Caco-2 (cell line): ENCODE measurements at regions of chr1 and their contacts with region 1.

Region 1: DNA sequence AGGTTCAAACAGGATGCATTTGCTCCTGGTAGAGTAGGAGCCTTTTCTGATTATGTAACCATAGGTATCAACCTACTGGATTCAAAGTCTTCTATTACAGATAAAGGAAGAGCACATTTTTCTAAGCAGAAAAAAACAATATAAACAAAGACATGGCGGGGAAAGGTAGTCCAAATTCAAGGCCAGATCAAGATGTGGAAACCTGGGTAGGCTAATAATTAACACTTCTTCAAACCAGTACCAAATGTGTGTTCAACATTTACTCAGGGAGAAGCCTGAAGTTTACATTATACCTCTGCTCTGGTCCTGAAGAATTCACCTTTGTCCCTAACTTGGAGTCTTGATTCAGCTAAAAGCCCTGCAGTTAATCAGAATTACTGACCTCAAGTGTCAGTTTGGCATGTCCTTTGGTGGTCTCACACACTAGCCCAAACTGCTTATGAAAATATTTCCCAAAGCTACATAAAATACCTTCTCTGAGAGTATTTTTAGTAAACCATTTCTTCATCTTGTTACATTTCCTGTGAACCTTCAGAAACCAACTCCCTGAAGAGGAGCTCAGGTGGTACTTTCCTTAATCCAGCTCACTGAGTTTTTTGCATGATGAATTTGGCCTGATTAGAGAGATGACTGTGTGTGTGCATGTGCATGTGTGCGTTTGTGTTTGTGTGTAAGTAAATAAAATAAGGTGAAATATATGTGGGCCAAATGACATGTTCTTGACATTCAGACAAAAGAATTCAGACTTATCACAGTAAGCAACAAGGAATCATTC is 70.2 kb downstream of the TOR3A start:
- DNase-seq: peak in 1 of 2 experiments; percentile 57
- H3K4me3 ChIP-seq: no peak overlapping the region
- H3K4me3 Mint-ChIP-seq: peak overlapping the region; percentile 44
- H3K27ac Mint-ChIP-seq: peak overlapping the region; percentile 15
- H3K4me1 ChIP-seq: peaks cover 21% of the 10 kb centered on the region
- H3K4me1 Mint-ChIP-seq: peaks cover 23% of the 10 kb centered on the region
- H3K27me3 ChIP-seq: no peaks in the 10 kb centered on the region
- H3K27me3 Mint-ChIP-seq: no peaks in the 10 kb centered on the region
- CTCF ChIP-seq: no peak

Region 2: GRCh38 chr1:179164494-179164893 is 12.4 kb after region 1 on chr1:
- CTCF ChIA-PET with region 1: no interaction called
- POLR2A ChIA-PET with region 1: interaction called, 14 read pairs
- intact Hi-C with region 1: loop called (anchors 1 kb)
- DNase-seq: peak; percentile 41 to 48
- H3K4me3 ChIP-seq: no peak overlapping the region
- H3K4me3 Mint-ChIP-seq: no peak overlapping the region
- H3K27ac Mint-ChIP-seq: no peak overlapping the region
- H3K4me1 ChIP-seq: peaks cover 34% of the 10 kb centered on the region
- H3K4me1 Mint-ChIP-seq: peaks cover 22% of the 10 kb centered on the region
- H3K27me3 ChIP-seq: no peaks in the 10 kb centered on the region
- H3K27me3 Mint-ChIP-seq: no peaks in the 10 kb centered on the region
- CTCF ChIP-seq: no peak

Region 3: DNA sequence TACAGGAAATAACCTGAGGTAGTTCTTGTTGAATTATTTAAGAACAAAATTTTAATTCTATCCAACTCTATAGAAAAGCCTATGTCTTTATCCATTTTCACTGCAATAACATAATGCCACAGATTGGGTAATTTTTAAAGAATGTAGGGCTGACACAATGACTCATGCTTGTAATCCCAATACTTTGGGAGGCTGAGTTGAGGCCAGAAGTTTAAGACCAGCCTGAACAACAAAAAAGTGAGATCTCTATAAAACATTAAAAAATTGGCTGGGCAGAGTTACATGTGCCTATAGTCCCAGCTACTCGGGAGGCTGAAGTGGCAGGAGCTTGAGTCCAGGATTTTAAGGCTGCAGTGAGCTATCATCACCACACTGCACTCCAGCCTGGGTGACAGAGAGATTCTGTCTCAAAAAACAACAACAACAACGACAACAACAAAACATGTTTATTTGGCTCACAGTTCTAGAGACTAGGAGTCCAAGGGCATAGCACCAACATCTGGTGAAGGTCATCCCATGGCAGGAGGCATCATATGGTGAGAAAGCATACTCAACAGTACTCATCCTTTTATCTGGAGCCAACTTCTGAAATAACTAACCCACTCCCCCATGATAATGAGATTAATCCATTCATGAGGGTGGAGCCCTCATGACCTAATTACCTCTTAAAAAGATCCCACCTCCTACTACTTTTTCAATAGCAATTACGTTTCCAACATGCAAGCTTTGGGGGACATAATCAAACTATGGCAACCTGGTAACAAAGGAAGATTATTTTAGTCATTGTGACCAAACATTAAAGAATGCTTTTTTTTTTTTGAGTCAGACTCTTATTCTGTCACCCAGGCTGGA is 17.7 kb after region 1 on chr1:
- CTCF ChIA-PET with region 1: no interaction called
- POLR2A ChIA-PET with region 1: interaction called, 14 read pairs
- intact Hi-C with region 1: no loop called
- DNase-seq: no peak
- H3K4me3 ChIP-seq: no peak overlapping the region
- H3K4me3 Mint-ChIP-seq: no peak overlapping the region
- H3K27ac Mint-ChIP-seq: no peak overlapping the region
- H3K4me1 ChIP-seq: peaks cover 13% of the 10 kb centered on the region
- H3K4me1 Mint-ChIP-seq: peaks cover 10% of the 10 kb centered on the region
- H3K27me3 ChIP-seq: no peaks in the 10 kb centered on the region
- H3K27me3 Mint-ChIP-seq: no peaks in the 10 kb centered on the region
- CTCF ChIP-seq: no peak